ENCODE measurements at regions of chr7 and their contacts with region 1.

Region 1: DNA sequence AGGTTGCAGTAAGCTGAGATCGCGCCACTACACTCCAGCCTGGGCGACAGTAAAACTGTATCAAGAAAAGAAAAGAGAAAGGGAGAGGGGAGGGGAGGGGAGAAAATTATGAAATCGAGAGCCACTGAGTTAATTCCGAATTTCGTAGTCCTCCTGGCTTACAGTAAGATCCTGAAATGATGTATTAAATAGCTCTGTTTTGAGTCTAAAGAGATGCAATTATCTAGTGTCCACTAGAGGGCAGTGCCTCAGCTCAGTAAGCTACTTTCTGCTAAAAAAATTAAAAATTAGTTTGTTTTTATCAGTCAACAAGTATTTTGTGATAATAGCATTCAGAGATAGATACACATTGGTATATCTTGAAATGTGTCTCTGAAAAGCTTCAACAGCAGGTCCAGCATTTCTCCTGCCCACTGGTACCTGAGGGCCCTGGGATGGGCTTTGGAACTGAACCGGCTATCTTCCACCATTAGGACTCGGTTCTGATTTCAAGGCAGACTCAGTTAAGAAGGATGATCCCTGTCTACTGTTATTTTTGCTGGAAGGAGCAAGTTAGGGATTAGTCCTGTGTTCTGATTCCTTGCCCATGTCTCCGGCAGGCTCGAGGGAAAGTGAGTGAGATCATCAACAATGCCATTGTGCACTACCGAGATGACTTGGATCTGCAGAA is 19.5 kb downstream of the TSPAN33 start:
- DNase-seq: no peak
- ATAC-seq: no peak

Region 2: GRCh38 chr7:129083525-129083924 is 80.5 kb before region 1 on chr7:
- intact Hi-C with region 1: no loop called
- DNase-seq: no peak
- ATAC-seq: no peak

Region 3: DNA sequence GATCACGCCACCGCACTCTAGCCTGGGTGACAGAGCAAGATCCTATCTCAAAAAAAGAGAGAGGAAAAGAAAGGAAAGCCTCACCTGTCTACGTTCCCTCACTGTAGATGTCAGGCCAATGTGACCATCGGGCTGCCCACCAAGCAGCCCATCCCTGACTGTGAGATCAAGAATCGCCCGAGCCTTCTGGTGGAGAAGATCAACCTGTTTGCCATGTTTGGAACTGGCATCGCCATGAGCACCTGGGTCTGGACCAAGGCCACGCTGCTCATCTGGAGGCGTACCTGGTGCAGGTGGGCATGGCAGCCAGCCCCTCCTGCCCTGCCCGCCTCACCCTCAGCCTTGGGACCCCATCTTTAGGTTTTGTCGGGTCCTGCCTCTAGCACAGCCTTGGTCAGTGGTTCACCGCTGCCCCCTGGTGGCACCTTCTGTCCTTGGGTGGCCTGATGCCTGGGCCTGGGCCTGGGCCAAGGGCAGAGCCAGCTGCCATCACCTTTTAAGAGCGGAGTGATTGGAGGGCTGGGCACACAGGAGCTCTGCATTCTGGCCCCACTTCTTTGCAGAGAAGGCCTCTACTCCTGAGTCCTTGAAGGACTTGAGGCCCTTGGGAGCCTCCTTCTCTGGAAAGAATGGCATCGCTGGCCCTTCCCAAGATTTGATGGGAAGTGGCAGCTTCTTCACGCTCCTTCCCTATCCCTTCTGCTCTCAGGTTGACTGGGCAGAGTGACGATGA is 46.4 kb after region 1 on chr7:
- intact Hi-C with region 1: loop called (anchors 1 to 10 kb)
- DNase-seq: peak; percentile 86
- ATAC-seq: peak; percentile 92 to 95

Region 4: GRCh38 chr7:129343099-129343700 is 179.2 kb after region 1 on chr7:
- intact Hi-C with region 1: no loop called
- DNase-seq: no peak
- ATAC-seq: peak in 1 of 2 donors; percentile 40

Region 5: GRCh38 chr7:129522088-129522970 is 358.3 kb after region 1 on chr7:
- intact Hi-C with region 1: no loop called
- DNase-seq: no peak
- ATAC-seq: no peak

Measured in left cardiac atrium (tissue), 4 donors.